PC-9 (cell line): ENCODE measurements at regions of chr13 and their contacts with region 1.

Region 1: GRCh38 chr13:49936085-49936940 is at the start of gene SPRYD7:
- DNase-seq: peak; percentile 92 to 99
- H3K4me3 ChIP-seq: peak within 1 kb of the TSS; percentile 90
- H3K27ac ChIP-seq: peak within 1 kb of the TSS; percentile 59
- H3K4me1 ChIP-seq: peaks cover 9% of the 10 kb centered on the region
- H3K27me3 ChIP-seq: no peaks in the 10 kb centered on the region
- CTCF ChIP-seq: peak; percentile 94
- total RNA-seq, gene SPRYD7: 5.3 and 6.4 TPM in 2 replicates

Region 2: GRCh38 chr13:49356223-49356622 is 580.1 kb before region 1 on chr13:
- CTCF ChIA-PET with region 1: no interaction called
- POLR2A ChIA-PET with region 1: no interaction called
- intact Hi-C with region 1: no loop called
- DNase-seq: no peak
- H3K4me3 ChIP-seq: no peak overlapping the region
- H3K27ac ChIP-seq: no peak overlapping the region
- H3K4me1 ChIP-seq: no peaks in the 10 kb centered on the region
- H3K27me3 ChIP-seq: no peaks in the 10 kb centered on the region
- CTCF ChIP-seq: no peak

Region 3: DNA sequence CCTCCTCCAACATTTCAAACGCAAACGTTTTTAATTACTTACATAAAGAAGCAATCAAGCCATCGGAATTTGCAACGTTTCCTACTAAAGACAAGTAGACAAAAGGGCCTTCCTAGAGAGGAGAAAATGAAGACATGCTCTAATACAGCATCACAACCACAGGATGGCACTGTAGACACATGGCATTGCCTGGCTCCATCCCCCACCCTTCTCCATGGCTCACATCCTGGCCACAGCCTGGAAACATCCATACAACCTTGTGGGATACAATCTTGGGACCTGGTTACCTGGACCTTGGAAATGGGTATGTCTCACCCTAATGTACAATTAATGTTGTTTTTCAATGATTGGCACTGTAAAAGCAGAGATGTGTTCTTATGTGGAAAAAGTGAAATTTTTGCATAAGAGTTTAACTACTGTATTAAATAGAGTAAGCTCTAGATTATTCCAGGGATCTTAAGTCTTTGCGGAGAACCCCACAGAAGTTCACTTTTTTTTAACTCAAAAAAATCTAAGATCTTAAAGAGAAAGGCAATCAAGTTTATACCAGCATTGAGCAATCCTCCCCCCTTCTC is 266.5 kb before region 1 on chr13:
- CTCF ChIA-PET with region 1: interaction called, 10 read pairs
- POLR2A ChIA-PET with region 1: no interaction called
- intact Hi-C with region 1: no loop called
- DNase-seq: peak in 1 of 2 experiments; percentile 48
- H3K4me3 ChIP-seq: no peak overlapping the region
- H3K27ac ChIP-seq: no peak overlapping the region
- H3K4me1 ChIP-seq: no peaks in the 10 kb centered on the region
- H3K27me3 ChIP-seq: no peaks in the 10 kb centered on the region
- CTCF ChIP-seq: peak; percentile 75

Region 4: DNA sequence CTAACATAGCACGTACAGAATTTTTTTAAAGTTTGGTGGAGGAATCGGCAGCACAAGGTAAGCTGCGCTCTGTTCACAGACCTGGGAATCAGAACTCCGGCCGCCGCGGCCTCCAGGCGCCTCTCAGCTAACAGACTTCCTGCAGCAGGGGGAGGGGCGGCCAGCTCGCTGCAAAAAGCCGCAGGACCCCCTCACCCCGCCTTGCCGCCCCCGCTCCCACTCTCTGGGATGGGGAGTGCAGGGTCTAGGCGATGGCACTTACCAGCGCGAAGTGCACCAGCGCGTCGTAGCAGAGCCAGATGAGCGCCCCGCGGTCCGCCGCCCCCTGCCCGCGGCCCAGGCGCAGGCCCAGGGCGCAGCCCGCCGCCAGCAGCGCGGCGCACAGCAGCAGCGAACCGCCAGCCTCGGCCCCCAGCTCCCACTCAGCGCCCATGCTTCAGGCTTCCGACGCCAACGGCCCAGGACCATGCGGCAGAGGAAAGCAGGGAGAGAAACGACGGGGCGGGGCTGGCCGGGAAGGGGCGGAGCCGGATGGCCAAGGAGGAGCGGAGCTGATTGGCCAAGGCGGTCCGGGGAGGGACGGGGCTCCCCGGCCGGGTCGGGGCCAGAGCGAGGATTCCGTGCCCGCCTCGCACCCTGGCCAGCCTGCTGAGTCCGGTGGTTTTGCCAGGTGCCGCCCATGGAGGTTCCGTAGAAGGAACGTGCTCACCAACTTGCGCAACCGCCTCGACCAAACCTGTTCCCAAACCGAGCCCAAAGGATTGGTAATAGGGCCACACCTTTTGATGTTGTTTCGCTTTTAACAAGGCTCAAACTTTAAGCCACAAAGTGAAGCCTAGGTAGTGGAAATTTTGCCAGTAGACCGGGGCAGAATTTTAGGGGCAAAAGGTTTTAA is 245.1 kb before region 1 on chr13 and contains the start of gene EBPL:
- CTCF ChIA-PET with region 1: no interaction called
- POLR2A ChIA-PET with region 1: no interaction called
- intact Hi-C with region 1: loop called (anchors 5 kb)
- DNase-seq: peak; percentile 92 to 96
- H3K4me3 ChIP-seq: peak within 1 kb of the TSS; percentile 71
- H3K27ac ChIP-seq: peak within 1 kb of the TSS; percentile 91
- H3K4me1 ChIP-seq: peaks cover 33% of the 10 kb centered on the region
- H3K27me3 ChIP-seq: no peaks in the 10 kb centered on the region
- CTCF ChIP-seq: no peak
- total RNA-seq, gene EBPL: 77.0 and 100 TPM in 2 replicates

Region 5: DNA sequence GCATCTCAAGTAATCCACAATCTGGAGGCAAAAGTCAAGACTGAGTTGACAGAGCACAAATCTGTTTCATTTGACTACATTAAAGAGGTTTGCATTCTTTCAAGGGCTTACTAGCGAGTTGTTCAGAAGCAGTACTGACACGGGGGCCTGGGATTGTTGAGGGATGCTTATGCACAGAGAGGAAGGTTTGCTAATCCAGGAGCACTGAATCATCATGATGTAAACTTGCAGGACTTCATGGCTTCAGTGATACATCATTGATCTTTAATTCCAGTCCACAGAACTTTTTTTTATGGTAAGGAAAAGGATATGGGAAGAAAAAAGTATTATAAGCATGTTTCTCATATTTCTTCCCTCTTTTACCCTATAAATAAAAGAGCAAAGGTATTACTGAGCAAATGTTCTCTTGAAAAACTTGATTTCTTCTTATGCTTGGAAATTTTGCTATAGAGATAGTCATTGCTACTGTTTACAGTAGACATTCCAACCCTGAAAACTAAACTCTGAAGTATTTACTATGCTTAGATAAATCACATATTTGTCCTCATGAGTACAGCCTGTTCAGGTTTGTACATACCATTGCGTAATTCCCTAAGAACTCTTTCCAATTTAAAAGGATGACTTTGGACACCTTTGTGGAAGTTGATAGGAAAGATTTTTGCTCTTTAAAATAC is 78.0 kb before region 1 on chr13:
- CTCF ChIA-PET with region 1: no interaction called
- POLR2A ChIA-PET with region 1: no interaction called
- intact Hi-C with region 1: loop called (anchors 5 kb)
- DNase-seq: peak; percentile 61 to 96
- H3K4me3 ChIP-seq: peak overlapping the region; percentile 55
- H3K27ac ChIP-seq: peak overlapping the region; percentile 98
- H3K4me1 ChIP-seq: peaks cover 33% of the 10 kb centered on the region
- H3K27me3 ChIP-seq: no peaks in the 10 kb centered on the region
- CTCF ChIP-seq: no peak

Region 6: DNA sequence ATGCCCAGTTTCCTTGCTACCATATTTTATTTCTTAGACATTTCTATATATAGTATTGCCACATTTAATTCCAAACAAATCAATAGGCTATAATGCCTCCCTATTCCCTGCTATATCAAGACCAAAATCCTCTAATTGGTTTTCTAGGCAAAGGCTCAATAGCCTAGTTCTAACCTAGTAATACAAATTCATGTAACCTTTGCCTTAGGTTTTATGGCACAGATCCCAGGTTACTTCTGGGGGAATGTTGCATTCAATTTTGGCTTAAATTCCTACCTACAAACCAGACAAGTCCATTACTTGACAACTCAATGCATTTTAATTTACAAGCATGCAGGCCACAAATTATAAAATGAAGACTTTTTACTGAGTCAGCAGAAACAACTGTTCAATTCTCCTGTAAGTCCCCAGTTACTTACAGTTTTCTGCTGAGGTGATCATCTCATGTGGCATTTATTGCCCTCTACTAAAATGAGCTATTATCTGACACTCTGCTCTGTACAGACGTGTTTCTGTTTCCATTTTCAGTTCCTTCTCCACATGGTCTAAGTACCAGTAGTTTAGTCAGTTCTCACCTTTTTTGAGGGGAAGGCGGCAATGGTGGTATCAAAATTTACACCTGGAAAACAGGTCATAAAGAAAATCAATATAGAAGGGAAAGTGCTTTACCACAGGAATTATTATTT is 90.6 kb after region 1 on chr13:
- CTCF ChIA-PET with region 1: no interaction called
- POLR2A ChIA-PET with region 1: no interaction called
- intact Hi-C with region 1: no loop called
- DNase-seq: no peak
- H3K4me3 ChIP-seq: no peak overlapping the region
- H3K27ac ChIP-seq: no peak overlapping the region
- H3K4me1 ChIP-seq: no peaks in the 10 kb centered on the region
- H3K27me3 ChIP-seq: no peaks in the 10 kb centered on the region
- CTCF ChIP-seq: no peak

Region 7: DNA sequence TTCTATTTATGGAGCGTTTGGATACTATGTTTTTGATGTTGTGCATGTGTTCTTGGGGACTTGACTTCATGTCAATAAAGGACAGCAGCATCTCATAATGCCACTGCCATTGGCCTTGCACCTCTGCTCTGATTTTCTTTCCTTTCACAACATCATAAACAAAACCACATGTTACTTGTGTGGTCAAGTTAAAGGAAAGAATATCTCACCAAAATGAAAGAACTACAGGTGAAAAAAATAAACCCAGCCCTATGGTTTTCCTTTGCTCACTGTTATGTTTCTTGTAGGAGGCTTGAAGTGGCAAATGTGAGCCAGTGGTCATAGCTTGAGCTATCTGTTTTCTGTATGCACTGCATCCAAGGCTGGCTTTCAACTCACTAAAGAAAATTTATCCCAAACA is 319.3 kb after region 1 on chr13:
- CTCF ChIA-PET with region 1: no interaction called
- POLR2A ChIA-PET with region 1: interaction called, 10 read pairs
- intact Hi-C with region 1: no loop called
- DNase-seq: no peak
- H3K4me3 ChIP-seq: no peak overlapping the region
- H3K27ac ChIP-seq: no peak overlapping the region
- H3K4me1 ChIP-seq: no peaks in the 10 kb centered on the region
- H3K27me3 ChIP-seq: no peaks in the 10 kb centered on the region
- CTCF ChIP-seq: no peak

Region 8: DNA sequence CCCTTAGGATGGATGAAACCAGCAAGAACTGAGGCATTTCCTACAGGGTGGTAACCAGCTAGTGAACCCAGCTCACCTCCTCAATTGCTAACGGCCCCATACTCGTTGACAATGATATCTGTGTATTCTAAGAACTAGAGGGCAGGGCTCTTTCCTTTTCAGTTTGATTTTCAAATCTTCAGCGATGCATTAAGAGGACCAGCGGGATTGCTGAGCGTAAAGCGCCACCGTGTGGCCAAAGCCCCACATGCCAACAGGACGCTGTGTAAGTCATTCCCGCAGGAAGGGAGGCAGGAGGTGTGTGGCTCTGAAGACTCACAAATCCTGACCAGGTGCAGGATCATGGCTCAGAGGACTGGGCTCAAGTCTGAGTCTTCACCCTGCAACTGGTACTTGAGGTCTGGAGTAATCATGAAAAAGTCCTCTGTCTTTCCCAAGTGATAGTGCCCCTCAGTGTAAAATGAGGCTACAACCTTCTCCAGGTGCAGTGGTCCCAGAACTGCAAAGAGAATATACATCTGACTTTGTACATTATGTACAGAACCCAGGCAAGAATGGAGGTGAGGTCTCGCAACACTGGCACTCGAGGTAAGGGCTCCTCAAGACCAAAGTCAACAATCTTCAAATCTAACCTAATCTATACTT is 1133.8 kb after region 1 on chr13:
- CTCF ChIA-PET with region 1: no interaction called
- POLR2A ChIA-PET with region 1: no interaction called
- intact Hi-C with region 1: loop called (anchors 1 kb)
- DNase-seq: peak; percentile 64 to 79
- H3K4me3 ChIP-seq: no peak overlapping the region
- H3K27ac ChIP-seq: no peak overlapping the region
- H3K4me1 ChIP-seq: no peaks in the 10 kb centered on the region
- H3K27me3 ChIP-seq: no peaks in the 10 kb centered on the region; the same call in 1 of the 2 replicates
- CTCF ChIP-seq: peak; percentile 91